Common myeloid progenitor, CD34-positive (primary cell): ENCODE measurements at regions of chr16 and their contacts with region 1.

Region 1: GRCh38 chr16:31440516-31441184 is 1.9 kb downstream of the ZNF843 start:
- DNase-seq: no peak
- H3K4me3 ChIP-seq: no peak overlapping the region
- H3K27ac ChIP-seq: no peak overlapping the region
- H3K4me1 ChIP-seq: peaks cover 0 to 9% (median 4%) of the 10 kb centered on the region in 4 experiments
- H3K27me3 ChIP-seq: no peaks in the 10 kb centered on the region

Region 2: DNA sequence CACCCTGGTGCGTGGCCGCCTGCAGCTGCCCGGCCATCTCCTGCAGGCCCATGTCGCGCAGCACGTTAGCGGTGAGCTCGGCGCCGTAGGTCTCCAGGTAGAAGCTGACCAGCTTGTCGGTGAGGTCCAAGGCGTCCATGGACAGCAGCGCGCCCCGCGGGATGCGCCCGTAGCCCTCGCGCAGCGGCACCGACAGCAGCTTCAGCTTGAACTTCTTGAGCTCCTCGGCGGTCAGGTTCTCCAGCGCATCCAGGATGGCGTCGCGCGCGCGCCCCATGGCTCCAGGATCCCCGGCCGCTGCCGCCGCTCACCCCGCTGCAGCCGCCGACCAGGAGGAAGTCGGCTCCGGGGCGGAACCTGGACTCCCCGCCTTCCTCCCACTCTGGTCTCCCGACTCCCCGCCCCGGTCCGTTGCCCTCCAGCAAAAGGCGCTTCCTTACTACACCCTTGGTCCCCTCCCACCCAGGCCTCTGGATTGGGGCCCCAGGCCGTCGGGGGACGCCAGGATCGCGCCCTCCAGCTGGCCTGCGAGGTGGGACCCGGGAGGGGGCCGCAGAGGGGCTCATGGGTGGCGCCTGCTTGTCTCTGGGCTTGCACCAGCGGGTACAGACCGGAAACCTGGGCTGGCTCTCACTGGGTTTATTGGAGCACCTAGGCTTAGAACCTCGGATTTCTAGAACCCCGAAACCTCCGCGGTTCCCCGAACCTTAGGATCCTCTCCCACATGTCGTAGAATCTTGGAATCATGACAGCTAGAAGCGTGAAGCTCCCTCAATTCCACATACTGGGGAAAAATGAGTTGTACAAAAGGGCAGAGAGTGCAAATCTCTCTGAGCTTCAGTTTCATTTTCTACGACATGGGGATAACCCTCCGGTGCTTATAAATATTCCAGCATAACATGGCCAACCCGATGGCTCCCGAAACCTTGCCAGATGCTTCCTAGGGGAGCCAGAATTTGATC is 238.0 kb before region 1 on chr16 and contains the start of gene PYCARD:
- CTCF ChIA-PET with region 1: interaction called, 17 read pairs
- POLR2A ChIA-PET with region 1: no interaction called
- DNase-seq: peak in 2 of 3 donors; percentile 52 to 81
- H3K4me3 ChIP-seq: peak within 1 kb of the TSS; percentile 75 to 97 (median 88)
- H3K27ac ChIP-seq: peak within 1 kb of the TSS; percentile 15 to 72
- H3K4me1 ChIP-seq: peaks cover 9 to 56% (median 49%) of the 10 kb centered on the region in 4 experiments
- H3K27me3 ChIP-seq: no peaks in the 10 kb centered on the region

Region 3: GRCh38 chr16:31427441-31428278 is 13.0 kb before region 1 on chr16:
- CTCF ChIA-PET with region 1: interaction called, 11 read pairs
- POLR2A ChIA-PET with region 1: no interaction called
- DNase-seq: peak; percentile 46 to 64 (median 58)
- H3K4me3 ChIP-seq: peak overlapping the region in 2 of 7 experiments; percentile 11 to 37
- H3K27ac ChIP-seq: no peak overlapping the region
- H3K4me1 ChIP-seq: peaks cover 0 to 6% (median 3%) of the 10 kb centered on the region in 4 experiments
- H3K27me3 ChIP-seq: no peaks in the 10 kb centered on the region

Region 4: GRCh38 chr16:31451681-31452351 is 11.2 kb after region 1 on chr16:
- CTCF ChIA-PET with region 1: interaction called, 36 read pairs
- POLR2A ChIA-PET with region 1: no interaction called
- DNase-seq: peak; percentile 48 to 75 (median 63)
- H3K4me3 ChIP-seq: no peak overlapping the region
- H3K27ac ChIP-seq: peak overlapping the region in 1 of 2 experiments; percentile 49
- H3K4me1 ChIP-seq: peaks cover 1 to 53% (median 40%) of the 10 kb centered on the region in 4 experiments
- H3K27me3 ChIP-seq: no peaks in the 10 kb centered on the region

Region 5: DNA sequence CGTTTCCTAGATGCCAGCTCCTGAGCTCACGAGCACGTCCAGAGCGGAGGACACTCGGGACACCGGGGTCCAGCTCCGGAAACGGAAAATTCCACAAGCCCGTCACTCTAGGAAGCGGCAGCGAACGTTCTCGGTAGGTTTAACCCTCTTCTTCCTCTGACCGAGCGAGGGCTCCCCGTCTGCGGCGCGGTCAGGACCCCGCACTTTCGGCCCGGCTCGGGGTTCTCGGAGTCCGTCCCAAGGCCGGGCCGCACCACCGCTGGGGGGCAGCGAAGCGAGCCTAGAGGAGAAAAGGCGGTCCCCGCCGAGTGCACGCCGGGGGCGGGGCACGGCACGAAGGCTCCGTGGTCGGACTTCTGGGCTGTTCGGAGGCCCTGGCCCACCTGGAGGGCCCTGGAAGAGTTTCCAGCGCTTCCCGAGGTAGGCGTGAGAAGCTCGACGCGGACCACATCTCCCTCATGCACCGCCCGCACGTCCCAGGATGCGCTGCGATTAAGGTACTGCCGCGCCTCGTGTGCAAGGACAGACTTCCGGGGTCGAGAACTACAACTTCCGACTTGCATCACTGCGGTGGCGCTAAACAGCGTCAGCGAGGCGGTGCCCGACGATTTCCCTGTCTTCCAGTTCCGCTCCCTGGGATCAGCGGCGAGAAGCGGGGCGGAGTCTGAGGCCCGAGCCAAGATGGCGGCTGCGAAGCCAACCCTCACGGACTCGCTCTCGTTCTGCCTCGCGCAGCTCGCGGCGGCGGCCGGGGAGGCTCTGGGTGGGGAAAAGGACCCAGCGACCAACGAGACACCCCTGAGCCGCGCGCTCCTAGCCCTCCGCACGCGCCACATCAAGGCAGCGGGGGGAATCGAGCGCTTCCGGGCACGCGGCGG is 18.4 kb after region 1 on chr16 and contains the start of gene ARMC5:
- CTCF ChIA-PET with region 1: interaction called, 36 read pairs
- POLR2A ChIA-PET with region 1: interaction called, 7 read pairs
- DNase-seq: peak; percentile 98 to 99 (median 99)
- H3K4me3 ChIP-seq: peak within 1 kb of the TSS; percentile 66 to 90 (median 86)
- H3K27ac ChIP-seq: peak within 1 kb of the TSS; percentile 97 to 98
- H3K4me1 ChIP-seq: peaks cover 2 to 59% (median 50%) of the 10 kb centered on the region in 4 experiments
- H3K27me3 ChIP-seq: no peaks in the 10 kb centered on the region